ENCODE measurements at regions of chr11 and their contacts with region 1.

Region 1: GRCh38 chr11:96342961-96343711 is at the start of gene MAML2:
- H3K4me3 ChIP-seq: peak within 1 kb of the TSS; percentile 73
- H3K27ac ChIP-seq: peak within 1 kb of the TSS; percentile 60; the same call in 1 of the 2 replicates
- H3K4me1 ChIP-seq: peaks cover under 1% of the 10 kb centered on the region; the same call in 1 of the 2 replicates
- CTCF ChIP-seq: peak; percentile 67

Region 2: DNA sequence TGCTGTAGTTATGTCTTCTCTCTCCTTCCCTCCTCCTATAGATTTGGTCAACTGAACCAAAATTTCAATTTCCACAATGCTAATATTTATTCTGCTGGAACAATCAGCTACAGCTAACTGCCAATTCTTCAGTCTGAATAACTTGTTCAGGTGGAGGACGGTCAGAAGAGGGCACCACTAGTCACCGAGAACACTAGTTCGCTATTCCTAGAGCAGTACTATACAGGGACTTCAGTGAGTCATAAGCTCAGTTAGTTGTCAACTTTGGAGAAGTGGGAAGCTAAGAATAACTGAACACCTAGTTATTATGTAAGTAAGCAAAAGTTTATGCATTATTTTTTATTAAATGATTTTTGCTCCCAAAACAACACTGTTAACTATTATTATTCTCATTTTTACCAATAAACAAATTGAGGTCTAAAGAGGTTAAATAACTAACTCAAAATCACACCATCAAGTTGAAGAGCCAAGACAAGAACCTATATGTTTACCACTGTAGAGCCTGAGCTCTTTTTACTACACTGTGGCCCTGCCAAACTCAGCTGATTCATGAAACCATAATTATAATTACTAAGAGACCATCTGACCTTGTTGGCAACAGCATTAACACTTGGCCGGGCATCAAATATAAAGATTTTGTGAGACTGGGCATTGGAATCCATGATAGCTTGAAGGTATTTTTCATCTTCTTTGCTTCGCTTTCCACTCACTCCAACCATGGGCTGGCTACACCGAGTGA is 493.9 kb before region 1 on chr11:
- CTCF ChIA-PET with region 1: interaction called, 20 read pairs
- POLR2A ChIA-PET with region 1: no interaction called
- H3K4me3 ChIP-seq: no peak overlapping the region
- H3K27ac ChIP-seq: no peak overlapping the region
- H3K4me1 ChIP-seq: no peaks in the 10 kb centered on the region
- CTCF ChIP-seq: no peak

Region 3: GRCh38 chr11:96091476-96091875 is 251.7 kb before region 1 on chr11:
- CTCF ChIA-PET with region 1: interaction called, 11 read pairs
- POLR2A ChIA-PET with region 1: no interaction called
- H3K4me3 ChIP-seq: no peak overlapping the region
- H3K27ac ChIP-seq: no peak overlapping the region
- H3K4me1 ChIP-seq: no peaks in the 10 kb centered on the region
- CTCF ChIP-seq: no peak

Region 4: GRCh38 chr11:96189351-96189750 is 153.8 kb before region 1 on chr11:
- CTCF ChIA-PET with region 1: no interaction called
- POLR2A ChIA-PET with region 1: no interaction called
- H3K4me3 ChIP-seq: no peak overlapping the region
- H3K27ac ChIP-seq: no peak overlapping the region
- H3K4me1 ChIP-seq: peaks cover under 1% of the 10 kb centered on the region; the same call in 1 of the 2 replicates
- CTCF ChIP-seq: no peak

Region 5: GRCh38 chr11:96237766-96238266 is 105.3 kb before region 1 on chr11:
- CTCF ChIA-PET with region 1: interaction called, 14 read pairs
- POLR2A ChIA-PET with region 1: interaction called, 23 read pairs
- H3K4me3 ChIP-seq: no peak overlapping the region
- H3K27ac ChIP-seq: no peak overlapping the region
- H3K4me1 ChIP-seq: peaks cover 20% of the 10 kb centered on the region
- CTCF ChIP-seq: no peak

Region 6: GRCh38 chr11:96314326-96315020 is 28.7 kb before region 1 on chr11:
- CTCF ChIA-PET with region 1: interaction called, 10 read pairs
- POLR2A ChIA-PET with region 1: interaction called, 3 read pairs
- H3K4me3 ChIP-seq: no peak overlapping the region
- H3K27ac ChIP-seq: no peak overlapping the region
- H3K4me1 ChIP-seq: peaks cover 2% of the 10 kb centered on the region; the same call in 1 of the 2 replicates
- CTCF ChIP-seq: no peak

Region 7: GRCh38 chr11:96389720-96390487 is 46.8 kb after region 1 on chr11 and contains the starts of genes CCDC82 and JRKL:
- CTCF ChIA-PET with region 1: interaction called, 13 read pairs
- POLR2A ChIA-PET with region 1: interaction called, 19 read pairs
- H3K4me3 ChIP-seq: peak within 1 kb of the TSS; percentile 93
- H3K27ac ChIP-seq: peak within 1 kb of the TSS; percentile 86
- H3K4me1 ChIP-seq: no peaks in the 10 kb centered on the region
- CTCF ChIP-seq: no peak; the same call in 1 of the 2 replicates

Region 8: DNA sequence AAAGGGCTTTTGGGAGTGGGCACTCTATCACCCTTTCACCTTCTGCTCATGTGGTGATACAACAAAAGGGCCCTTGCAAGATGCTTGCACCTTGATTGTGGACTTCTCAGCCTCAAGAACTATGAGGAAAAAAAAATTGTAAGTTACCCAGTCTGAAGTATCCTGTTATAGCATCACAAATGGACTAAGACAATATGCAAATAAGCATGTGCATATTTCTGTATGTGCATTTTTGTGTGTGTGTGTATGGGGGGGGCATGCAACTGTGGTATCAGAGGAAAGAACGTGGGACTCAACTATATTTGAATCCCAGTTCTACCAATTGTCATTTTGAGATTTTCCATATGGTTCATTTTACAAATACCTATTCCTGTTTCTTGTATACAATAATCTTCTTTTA is 57.6 kb after region 1 on chr11:
- CTCF ChIA-PET with region 1: no interaction called
- POLR2A ChIA-PET with region 1: no interaction called
- H3K4me3 ChIP-seq: no peak overlapping the region
- H3K27ac ChIP-seq: no peak overlapping the region
- H3K4me1 ChIP-seq: no peaks in the 10 kb centered on the region
- CTCF ChIP-seq: no peak